Endothelial cell of umbilical vein (primary cell): ENCODE measurements at regions of chr12 and their contacts with region 1.

Region 1: GRCh38 chr12:24226745-24227350 is 277.4 kb upstream of the SOX5 start:
- DNase-seq: peak; percentile 95
- H3K4me3 ChIP-seq: no peak overlapping the region
- H3K27ac ChIP-seq: peak overlapping the region; percentile 80
- H3K4me1 ChIP-seq: peaks cover 27% of the 10 kb centered on the region
- H3K27me3 ChIP-seq: no peaks in the 10 kb centered on the region
- CTCF ChIP-seq: no peak
- POLR2A ChIP-seq: no peak

Region 2: GRCh38 chr12:24201258-24201970 is 25.4 kb before region 1 on chr12:
- CTCF ChIA-PET with region 1: interaction called, 4 read pairs
- POLR2A ChIA-PET with region 1: no interaction called
- dilution Hi-C with region 1: no loop called
- intact Hi-C with region 1: loop called (anchors 2 kb)
- DNase-seq: peak; percentile 87
- H3K4me3 ChIP-seq: no peak overlapping the region
- H3K27ac ChIP-seq: peak overlapping the region; percentile 22
- H3K4me1 ChIP-seq: peaks cover 14% of the 10 kb centered on the region
- H3K27me3 ChIP-seq: no peaks in the 10 kb centered on the region
- CTCF ChIP-seq: no peak
- POLR2A ChIP-seq: no peak

Region 3: DNA sequence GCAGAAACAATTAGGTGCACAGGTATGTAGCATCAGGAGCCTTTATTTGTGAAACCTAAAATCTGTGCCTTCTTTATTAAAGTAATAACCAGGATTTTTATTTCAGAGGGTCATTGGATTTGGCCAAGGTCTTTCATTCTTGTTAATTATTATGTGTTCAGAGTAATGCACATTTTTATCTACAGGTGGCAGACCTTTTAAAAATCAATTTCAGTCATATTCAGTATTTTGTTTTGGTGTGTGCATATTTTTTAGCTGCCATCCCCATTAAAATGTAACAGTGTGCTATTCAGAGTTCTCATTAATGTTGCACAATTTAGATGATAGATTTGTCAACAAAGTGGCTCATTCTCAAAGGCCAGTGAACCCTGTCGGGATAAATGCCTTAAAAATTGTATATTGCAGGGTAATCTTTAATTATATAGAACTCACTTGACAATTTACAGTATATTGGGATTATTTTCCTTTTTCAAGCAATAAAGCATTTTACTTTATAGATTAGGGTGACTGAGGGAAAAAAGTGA is 41.9 kb after region 1 on chr12:
- CTCF ChIA-PET with region 1: no interaction called
- POLR2A ChIA-PET with region 1: no interaction called
- dilution Hi-C with region 1: no loop called
- intact Hi-C with region 1: no loop called
- DNase-seq: no peak
- H3K4me3 ChIP-seq: no peak overlapping the region
- H3K27ac ChIP-seq: no peak overlapping the region
- H3K4me1 ChIP-seq: no peaks in the 10 kb centered on the region
- H3K27me3 ChIP-seq: no peaks in the 10 kb centered on the region
- CTCF ChIP-seq: no peak
- POLR2A ChIP-seq: no peak

Region 4: GRCh38 chr12:24349051-24349799 is 122.4 kb after region 1 on chr12:
- CTCF ChIA-PET with region 1: no interaction called
- POLR2A ChIA-PET with region 1: no interaction called
- dilution Hi-C with region 1: no loop called
- intact Hi-C with region 1: loop called (anchors 10 kb)
- DNase-seq: peak; percentile 73
- H3K4me3 ChIP-seq: no peak overlapping the region
- H3K27ac ChIP-seq: peak overlapping the region; percentile 84
- H3K4me1 ChIP-seq: peaks cover 12% of the 10 kb centered on the region
- H3K27me3 ChIP-seq: no peaks in the 10 kb centered on the region
- CTCF ChIP-seq: no peak
- POLR2A ChIP-seq: no peak